Upper lobe of right lung (tissue), 1 donor: ENCODE measurements at regions of chr3 and their contacts with region 1.

Region 1: DNA sequence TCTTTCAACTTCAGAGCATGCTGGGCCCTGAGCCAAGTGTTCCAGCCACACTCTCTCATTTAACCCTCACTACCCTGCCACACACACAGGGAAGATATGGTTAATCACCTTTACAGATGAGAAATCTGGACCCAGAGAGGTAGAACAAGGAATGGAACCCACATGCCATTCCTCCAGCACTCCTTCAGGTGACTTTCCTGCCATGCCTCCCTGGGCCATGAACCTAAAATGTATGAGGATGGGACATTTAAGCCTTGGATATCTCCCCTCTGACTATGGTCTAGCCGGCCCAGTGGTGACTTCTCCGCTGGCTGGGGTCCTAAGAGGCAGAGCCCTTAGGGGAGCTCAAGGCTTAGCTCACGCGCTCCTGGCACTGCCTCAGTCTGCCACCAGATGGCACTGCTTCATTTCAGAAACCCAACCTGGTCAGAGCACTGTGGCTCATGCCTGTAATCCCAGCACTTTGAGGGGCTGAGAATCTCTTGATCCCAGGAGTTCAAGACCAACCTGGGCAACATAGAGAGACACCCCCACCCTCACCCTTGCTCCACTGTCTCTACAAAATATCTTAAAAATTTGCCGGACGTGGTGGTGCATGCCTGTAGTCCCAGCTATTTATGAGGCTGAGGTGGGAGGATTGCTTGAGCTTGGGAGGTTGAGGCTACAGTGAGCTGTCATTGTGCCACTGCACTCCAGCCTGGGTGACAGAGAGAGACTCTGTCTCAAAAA is 2.2 kb upstream of the DCAF1 start:
- DNase-seq: peak; percentile 86
- ATAC-seq: peak; percentile 51
- H3K4me3 ChIP-seq: no peak overlapping the region
- H3K27ac ChIP-seq: no peak overlapping the region
- H3K4me1 ChIP-seq: peaks cover 8% of the 10 kb centered on the region
- H3K27me3 ChIP-seq: no peaks in the 10 kb centered on the region
- CTCF ChIP-seq: peak; percentile 96

Region 2: GRCh38 chr3:51682079-51682478 is 180.1 kb after region 1 on chr3:
- intact Hi-C with region 1: loop called (anchors 5 kb)
- DNase-seq: no peak
- ATAC-seq: peak; percentile 88
- H3K4me3 ChIP-seq: no peak overlapping the region
- H3K27ac ChIP-seq: peak overlapping the region; percentile 66
- H3K4me1 ChIP-seq: peaks cover 53% of the 10 kb centered on the region
- H3K27me3 ChIP-seq: no peaks in the 10 kb centered on the region
- CTCF ChIP-seq: peak; percentile 79

Region 3: DNA sequence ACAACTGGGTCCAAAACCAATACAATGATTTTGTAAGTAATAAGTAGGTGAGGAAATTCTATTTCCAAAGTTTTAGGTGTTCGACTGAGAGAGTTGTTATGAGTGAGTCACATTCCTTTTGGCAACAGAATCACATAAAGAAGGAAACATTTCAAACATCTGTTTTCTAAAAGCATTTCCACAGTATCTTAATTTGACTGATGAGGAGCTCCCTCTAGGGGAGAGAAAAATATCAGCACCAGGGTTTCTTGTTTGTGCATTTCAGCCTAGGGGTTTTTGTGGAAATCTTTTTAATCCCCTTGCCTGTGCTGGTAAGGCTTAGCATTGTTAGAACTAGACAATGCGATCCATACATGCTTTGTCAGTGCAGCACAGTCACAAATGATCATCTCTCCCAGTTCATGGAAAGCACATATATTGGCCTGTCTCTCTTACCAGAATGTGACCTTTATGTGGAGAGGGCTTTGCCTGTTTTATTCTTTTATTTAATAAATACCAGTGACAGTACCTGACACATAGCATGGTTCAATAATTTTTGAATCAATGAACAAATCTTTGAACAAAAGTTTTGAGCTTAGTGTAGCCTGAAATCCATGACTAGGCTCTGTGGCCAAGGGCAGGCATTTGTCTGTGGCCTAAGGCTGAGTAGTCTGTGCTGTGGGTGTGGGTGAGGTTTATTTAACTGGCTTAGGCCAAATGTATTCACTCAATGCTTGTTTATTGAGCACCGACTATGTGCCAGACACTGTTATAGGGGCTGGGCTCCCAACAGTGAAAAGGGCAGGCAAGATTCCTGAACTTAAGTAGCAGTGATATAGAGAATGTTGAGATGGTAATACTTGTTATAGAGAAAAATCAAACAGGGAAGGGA is 298.1 kb after region 1 on chr3:
- intact Hi-C with region 1: loop called (anchors 10 kb)
- DNase-seq: no peak
- ATAC-seq: peak; percentile 66
- H3K4me3 ChIP-seq: no peak overlapping the region
- H3K27ac ChIP-seq: no peak overlapping the region
- H3K4me1 ChIP-seq: peaks cover 4% of the 10 kb centered on the region
- H3K27me3 ChIP-seq: peaks cover 26% of the 10 kb centered on the region
- CTCF ChIP-seq: peak; percentile 74